GM10248 (cell line): ENCODE measurements at regions of chr17 and their contacts with region 1.

Region 1: DNA sequence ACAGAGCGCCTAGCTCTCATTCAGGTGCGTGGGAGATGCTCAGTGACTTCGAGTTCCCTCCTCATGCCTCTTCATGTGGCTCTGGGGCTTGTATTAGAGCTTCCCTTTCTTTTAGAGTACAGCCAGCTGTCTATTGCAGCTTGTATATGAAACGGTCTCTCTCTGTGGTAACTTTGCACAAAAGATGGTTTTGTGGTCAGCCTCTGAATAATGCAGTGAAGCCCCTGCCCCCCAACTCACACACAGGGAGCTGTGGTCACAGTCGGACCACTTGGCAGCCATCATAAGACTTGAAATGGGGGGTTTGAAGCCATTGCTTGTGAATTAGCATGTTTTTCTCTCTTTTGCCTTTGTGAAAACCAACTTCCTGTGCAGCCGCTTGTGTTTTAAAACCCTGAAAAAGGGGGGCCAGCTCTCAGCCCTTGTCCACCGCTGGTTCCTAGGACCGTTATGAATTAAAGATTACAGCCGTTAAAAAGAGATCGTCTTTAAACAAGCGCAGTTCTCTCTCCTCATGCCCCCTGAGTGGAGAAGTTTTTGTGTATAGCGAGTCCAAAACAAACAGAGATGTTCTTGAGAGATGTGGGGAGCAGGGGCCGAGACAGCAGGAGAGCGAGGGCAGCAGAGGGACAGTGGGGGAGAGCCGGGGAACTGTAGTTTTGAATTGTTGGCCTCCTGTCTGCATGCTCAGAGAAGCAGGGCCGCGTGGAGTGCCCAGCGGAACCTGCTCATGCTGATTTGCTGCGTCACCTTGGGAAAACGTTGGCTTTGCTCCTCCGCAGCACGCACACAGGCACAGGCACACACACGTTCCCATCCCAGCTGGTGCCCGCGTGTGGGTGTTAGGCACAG is 199.0 kb downstream of the MSI2 start:
- DNase-seq: peak; percentile 76
- CTCF ChIP-seq: no peak

Region 2: GRCh38 chr17:57255776-57256681 is 199.3 kb before region 1 on chr17 and contains the start of gene MSI2:
- CTCF ChIA-PET with region 1: no interaction called
- POLR2A ChIA-PET with region 1: interaction called, 14 read pairs
- DNase-seq: peak; percentile 84
- CTCF ChIP-seq: no peak

Region 3: DNA sequence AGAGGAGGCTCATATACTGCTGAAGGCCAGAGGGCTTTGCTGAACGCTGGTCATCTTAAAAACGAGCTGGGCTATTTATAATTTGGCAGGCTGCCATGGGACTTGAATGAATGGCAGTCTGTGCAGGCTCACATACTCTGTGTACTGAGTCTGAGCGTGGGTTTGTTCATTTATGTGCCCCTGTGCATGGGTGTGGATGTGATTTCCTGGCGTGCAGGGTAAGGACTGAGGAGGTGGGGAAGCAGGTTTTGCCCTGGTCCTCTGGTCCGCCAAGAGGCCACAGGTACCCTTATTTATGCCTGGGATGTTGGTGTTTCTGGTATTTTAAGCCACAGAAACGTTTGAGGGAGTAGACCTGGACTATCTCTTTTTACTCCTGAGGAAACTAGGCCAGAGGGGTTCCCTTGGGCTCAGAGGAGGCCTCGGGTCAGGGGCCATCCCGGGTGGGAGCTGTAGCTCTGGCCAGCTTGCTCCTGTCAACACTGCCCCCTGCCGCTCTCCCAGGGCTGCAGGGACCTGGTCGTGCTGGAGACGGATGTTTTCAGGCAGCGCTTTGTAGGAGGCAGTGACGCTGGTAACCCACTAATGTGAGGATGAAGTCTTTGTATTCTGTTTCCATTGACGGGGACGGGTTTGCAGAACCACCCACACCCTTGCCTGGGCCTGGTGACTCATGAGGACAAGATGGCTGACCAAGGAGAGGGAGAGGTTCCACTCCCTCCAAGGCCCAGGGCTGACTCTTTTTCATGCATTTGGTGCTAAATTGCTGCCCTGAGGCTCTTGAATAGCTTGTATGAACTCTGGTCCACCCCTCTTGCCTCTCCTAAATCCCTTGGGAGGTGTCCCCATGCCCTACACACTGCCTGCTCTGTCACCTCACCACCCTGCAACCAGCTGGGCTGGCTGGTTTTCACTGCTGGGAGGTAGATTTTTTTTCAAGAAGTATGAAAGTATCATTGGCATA is 14.5 kb before region 1 on chr17:
- CTCF ChIA-PET with region 1: interaction called, 18 read pairs
- POLR2A ChIA-PET with region 1: no interaction called
- DNase-seq: peak; percentile 77
- CTCF ChIP-seq: peak; percentile 47

Region 4: DNA sequence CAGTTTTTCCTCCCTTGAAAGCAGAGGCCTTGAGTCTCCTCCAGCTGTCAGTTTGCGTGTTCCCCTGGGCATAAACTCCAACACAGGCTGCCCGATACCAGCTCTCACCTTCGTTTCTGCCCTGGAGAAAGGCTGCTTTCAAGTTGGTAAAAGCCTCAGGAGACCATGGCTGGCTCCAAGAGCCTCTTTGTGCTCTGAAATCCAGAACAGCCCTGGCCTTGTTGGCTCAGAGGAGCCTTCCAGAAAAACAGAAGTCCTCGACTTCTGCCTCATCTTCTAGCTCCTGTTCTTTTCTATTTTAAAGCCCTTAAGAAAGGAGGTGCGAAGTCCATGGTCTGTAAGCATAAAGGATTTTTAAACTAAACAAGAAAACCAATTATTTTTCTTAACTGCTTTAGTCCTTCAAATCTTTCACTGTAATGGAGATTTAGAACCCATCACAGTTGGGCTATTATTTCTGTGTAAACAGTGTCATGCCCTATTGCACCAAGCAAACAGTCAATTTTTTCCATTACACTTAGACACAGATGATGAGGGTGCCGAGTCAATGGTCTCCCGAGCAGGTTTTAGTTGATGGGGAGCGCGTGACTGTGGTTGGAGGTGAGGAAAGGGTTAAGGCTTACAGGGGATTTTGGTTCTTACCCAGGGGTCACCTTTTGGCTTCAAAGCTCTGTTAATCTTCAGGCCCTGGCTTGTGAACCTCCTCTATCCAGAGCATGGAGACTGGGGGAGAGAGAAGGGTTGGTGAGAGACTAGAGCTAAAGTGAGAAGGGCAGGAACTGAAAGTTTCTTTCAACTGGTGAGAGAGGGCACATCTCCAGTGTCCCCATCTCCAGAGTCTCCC is 13.9 kb after region 1 on chr17:
- CTCF ChIA-PET with region 1: interaction called, 11 read pairs
- POLR2A ChIA-PET with region 1: no interaction called
- DNase-seq: peak; percentile 65
- CTCF ChIP-seq: no peak